ENCODE measurements at regions of chr3 and their contacts with region 1.

Region 1: DNA sequence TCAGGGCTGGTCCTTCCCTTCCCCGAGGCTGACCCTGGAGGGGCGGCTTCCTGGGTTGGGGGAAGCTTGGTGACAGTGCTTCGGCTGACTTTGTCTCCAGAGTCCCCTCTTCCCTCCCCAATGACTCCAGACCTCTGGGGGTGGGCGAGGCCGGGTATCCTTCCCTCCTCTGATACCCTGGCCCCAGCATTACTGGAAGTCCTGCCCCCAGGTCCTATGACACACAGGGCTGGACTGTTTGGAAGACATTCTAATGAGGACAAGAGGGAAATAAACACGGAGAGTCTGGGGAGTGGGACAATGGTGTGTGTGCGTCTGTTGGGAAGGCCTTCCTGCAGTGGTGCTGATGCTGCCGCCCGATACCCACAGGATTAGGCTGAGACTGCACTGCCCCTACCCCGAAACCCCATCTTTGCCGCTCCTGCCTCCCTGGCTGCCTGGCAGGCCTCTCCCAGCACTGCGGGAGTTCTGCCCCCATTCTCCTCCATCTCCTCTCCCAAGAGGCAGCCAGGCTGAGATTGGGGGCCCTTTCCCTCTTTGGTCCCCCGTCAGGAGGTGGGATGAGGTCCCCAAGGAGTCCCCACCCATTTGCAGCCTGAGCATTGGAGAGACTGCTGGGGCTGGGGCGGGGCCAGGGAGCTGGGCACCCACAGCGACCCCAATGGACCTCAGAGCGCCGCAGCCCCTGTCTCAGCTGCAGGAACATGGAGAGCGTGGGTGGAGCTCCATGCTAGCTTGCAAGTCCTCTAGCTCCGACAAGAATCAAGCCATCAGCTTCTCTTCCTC is 29.7 kb upstream of the FBLN2 start:
- DNase-seq: no peak
- H3K4me3 ChIP-seq: no peak overlapping the region
- H3K27ac ChIP-seq: no peak overlapping the region
- H3K4me1 ChIP-seq: peaks cover 0 to 2% (median 0%) of the 10 kb centered on the region in 4 experiments; a peak in 1 of 7 replicates
- H3K27me3 ChIP-seq: no peaks in the 10 kb centered on the region; a peak in 1 of 7 replicates
- CTCF ChIP-seq: peak in 1 of 3 experiments; percentile 20; a peak in 2 of 4 replicates
- EP300 ChIP-seq: no peak
- POLR2A ChIP-seq: no peak
- RAD21 ChIP-seq: no peak

Region 2: DNA sequence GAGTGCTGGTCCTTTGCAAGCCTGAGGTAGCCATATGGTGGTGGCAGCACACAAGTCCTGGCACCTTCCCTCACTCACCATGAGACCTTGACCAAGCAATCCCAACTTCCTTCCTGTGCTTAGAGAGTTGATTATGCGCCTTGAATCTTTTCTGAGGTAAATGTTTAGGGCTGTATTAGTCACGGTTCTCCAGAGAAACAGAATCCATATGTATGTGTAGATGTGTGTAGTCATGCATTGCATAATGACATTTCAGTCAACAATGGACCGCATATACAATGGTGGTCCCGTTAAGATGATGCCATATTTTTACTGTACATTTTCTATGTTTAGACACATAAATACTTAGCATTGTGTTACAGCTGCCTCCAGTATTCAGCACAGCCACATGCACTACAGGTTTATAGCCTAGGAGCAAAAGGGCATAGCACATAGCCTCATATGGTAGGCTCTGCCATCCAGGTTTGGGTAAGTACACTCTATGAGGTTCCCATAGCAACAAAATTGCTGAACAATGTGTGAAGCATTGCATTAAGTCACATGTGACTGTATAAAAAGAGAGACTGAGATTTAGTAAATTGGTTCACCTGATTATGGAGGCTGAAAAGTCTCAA is 78.9 kb before region 1 on chr3:
- CTCF ChIA-PET with region 1: no interaction called
- POLR2A ChIA-PET with region 1: no interaction called
- DNase-seq: no peak
- H3K4me3 ChIP-seq: no peak overlapping the region
- H3K27ac ChIP-seq: no peak overlapping the region
- H3K4me1 ChIP-seq: peaks cover 0 to 2% (median 0%) of the 10 kb centered on the region in 4 experiments; a peak in 1 of 7 replicates
- H3K27me3 ChIP-seq: no peaks in the 10 kb centered on the region
- CTCF ChIP-seq: no peak
- EP300 ChIP-seq: no peak
- POLR2A ChIP-seq: no peak
- RAD21 ChIP-seq: no peak

Region 3: DNA sequence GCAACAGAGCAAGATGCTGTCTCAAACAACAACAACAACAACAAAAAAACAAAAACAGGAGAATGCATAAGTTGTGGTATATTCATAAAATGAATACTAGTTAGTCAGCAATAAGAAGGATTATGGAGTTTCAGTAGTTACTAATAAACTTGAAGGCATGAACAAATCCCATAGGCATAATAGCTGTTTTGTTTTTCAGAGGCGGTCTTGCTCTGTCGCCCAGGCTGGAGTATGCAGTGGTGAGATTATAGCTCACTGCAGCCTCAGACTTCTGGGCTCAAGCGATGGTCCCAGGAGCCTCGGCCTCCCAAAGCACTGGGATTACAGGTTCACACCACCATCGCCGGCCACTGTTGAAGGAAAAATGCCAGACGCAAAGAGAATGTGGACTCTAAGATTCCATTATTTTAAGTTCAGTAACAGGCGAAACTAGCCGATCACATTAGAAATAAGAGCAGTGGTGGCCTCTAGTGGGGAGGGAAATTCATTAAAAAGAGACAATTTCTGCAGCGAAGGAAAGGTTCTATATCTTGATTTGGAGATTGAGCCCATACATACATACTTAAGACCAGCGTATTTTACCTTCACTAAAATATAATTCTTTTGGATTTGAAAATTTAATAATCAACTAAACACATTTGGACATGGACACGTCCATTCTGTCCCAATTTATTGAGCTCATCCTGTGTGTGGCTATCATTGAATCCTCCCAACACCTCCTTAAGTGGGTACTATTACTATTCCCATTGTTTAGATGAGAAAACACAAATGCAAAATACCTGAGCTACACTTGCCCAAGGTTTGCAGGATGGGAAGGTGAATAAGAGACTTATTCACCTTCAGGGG is 66.5 kb before region 1 on chr3:
- CTCF ChIA-PET with region 1: no interaction called
- POLR2A ChIA-PET with region 1: no interaction called
- DNase-seq: no peak
- H3K4me3 ChIP-seq: peak overlapping the region in 1 of 4 experiments; percentile 57; a peak in 2 of 8 replicates
- H3K27ac ChIP-seq: no peak overlapping the region
- H3K4me1 ChIP-seq: peaks cover 2 to 5% (median 4%) of the 10 kb centered on the region in 4 experiments; a peak in 5 of 7 replicates
- H3K27me3 ChIP-seq: no peaks in the 10 kb centered on the region
- CTCF ChIP-seq: peak in 2 of 3 experiments; percentile 43 to 48; a peak in 2 of 4 replicates
- EP300 ChIP-seq: no peak
- POLR2A ChIP-seq: no peak
- RAD21 ChIP-seq: peak; percentile 65 to 68

Region 4: DNA sequence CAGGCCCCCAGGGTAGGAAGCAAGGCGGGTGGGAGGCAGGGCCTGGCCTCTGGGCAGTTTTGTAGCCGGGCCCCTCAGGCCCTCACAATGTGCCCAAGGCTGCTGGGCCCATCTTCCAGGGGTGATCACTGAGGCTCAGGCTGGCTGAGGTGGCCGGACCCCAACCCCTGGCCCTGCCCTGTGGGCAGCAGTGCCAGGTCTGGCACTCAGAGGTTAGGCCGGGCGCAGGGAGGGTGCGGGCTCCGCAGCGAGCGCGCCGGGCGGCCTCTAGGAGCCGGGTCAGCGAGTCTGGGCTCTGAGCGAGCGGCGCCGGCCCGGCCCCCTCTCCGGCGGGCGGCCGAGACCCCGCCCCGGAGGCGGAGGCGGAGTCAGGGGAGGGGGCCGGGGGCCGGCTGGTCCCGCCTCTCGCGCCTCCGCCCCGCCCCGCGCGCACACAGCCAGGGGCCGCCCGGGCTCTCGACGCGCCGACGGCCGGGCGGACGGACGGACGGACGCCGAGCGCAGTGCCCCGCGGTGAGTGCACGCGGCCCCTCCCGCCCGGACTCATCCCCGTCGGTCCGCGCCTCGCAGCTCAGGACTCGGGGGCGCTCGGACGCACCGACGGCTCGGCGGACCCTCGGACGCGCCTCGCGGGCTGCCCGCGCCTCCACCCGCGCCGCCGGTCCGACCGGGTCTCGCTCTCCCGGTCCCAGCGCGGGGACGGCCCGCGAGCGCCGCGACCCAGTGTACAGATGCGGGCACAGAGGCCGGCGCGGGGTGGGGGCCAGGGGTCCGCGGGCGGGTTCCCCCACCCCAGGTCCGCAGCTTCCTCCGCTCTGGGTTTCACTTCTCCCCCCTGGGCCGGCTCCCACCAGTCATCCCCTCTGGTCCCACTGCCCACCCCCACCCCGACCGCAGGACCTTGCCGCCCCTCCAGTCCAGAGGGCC is 29.8 kb after region 1 on chr3 and contains the start of gene FBLN2:
- CTCF ChIA-PET with region 1: interaction called, 856 read pairs
- POLR2A ChIA-PET with region 1: no interaction called
- DNase-seq: peak in 1 of 2 experiments; percentile 86
- H3K4me3 ChIP-seq: peak within 1 kb of the TSS; percentile 32 to 55 (median 42)
- H3K27ac ChIP-seq: no peak within 1 kb of the TSS
- H3K4me1 ChIP-seq: peaks cover 0 to 28% (median 11%) of the 10 kb centered on the region in 4 experiments; a peak in 6 of 7 replicates
- H3K27me3 ChIP-seq: peaks cover 0 to 22% (median 18%) of the 10 kb centered on the region in 4 experiments; a peak in 6 of 7 replicates
- CTCF ChIP-seq: no peak
- EP300 ChIP-seq: no peak
- POLR2A ChIP-seq: peak in 1 of 2 experiments; percentile 24; a peak in 1 of 3 replicates
- RAD21 ChIP-seq: no peak
- total RNA-seq, gene FBLN2: 15.5 and 17.4 TPM in 2 replicates

Measured in H1 (cell line).